Activated CD4-positive, alpha-beta T cell treated with anti-CD3 and anti-CD28 coated beads, Interleukin-2, amount 10 ng/mL, durations not matched to agents 24 days and 14 days (primary cell): ENCODE measurements at regions of chr9 and their contacts with region 1.

Region 1: GRCh38 chr9:127955294-127956035 is 17.8 kb upstream of the DPM2 start:
- DNase-seq: peak; percentile 89
- H3K4me3 Mint-ChIP-seq: peak overlapping the region; percentile 42
- H3K27ac Mint-ChIP-seq: peak overlapping the region; percentile 72
- H3K4me1 Mint-ChIP-seq: peaks cover 71% of the 10 kb centered on the region
- H3K27me3 Mint-ChIP-seq: no peaks in the 10 kb centered on the region

Region 2: DNA sequence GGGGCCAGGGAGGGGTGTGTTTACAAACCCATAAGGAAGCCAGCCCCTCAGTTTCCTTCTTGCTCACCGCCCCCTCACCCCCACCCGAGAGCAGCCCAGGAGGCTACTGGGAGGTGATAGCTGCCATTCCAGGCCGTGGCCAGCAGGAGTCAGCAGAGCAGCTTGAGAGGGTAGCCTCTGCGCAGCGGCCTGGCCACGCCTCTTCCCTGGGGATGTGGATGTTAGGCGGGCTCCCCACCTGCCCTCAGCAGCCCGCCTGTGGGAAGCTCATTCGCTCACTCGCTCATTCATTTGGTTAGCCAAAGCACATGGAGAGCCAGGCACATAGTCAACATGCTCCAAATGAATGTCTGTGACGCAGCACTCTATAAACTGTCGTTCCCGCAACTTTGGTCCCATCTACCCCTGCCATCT is 11.7 kb before region 1 on chr9:
- intact Hi-C with region 1: loop called (anchors 1 kb)
- DNase-seq: peak; percentile 93
- H3K4me3 Mint-ChIP-seq: no peak overlapping the region
- H3K27ac Mint-ChIP-seq: peak overlapping the region; percentile 80
- H3K4me1 Mint-ChIP-seq: peaks cover 17% of the 10 kb centered on the region
- H3K27me3 Mint-ChIP-seq: no peaks in the 10 kb centered on the region

Region 3: DNA sequence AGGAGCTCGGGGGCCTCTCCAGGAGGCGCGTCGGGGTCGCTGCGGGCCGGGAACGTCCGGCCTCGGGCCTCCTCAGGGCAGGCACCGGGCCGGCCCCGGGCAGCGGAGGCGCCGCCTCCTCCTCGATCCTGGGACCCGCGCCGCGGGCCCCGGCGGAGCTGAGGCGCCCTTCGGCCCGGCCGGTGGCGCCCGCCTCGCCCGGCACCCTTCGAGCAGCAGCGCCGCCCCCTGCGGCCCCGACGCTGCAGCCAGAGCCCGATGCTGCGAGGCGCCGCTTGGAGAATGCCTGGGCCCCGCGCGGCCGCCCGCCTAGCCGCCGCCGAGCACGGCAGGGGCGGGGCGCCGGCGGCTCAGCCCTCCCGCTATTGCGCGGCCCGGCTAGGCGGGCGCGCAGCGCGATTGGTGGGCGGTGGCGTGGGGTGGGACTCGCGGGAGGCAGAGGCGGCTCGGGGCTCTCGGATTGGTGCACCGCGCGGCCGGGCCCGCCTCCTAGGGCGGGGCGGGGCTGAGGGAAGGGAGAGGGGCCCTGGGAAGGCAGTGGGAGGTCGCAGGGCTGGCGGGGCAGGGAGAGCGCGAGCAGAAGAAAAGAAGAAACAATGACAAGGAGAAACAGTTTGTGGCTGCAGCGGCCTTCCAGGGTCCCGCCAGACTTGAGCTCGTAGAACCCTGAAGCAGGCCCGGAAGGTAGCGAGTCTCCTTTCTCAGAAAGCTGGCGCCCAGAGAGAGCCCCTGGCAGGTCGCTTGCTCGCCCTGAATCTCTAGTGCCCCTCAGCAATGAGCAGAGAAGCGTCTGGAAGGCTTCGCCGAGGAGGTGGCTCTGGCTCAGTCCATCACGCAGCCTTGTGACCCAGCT is 25.5 kb after region 1 on chr9 and contains the start of gene EEIG1:
- intact Hi-C with region 1: loop called (anchors 1 kb)
- DNase-seq: peak; percentile 100
- H3K4me3 Mint-ChIP-seq: peak within 1 kb of the TSS; percentile 96
- H3K27ac Mint-ChIP-seq: peak within 1 kb of the TSS; percentile 94
- H3K4me1 Mint-ChIP-seq: peaks cover 53% of the 10 kb centered on the region
- H3K27me3 Mint-ChIP-seq: no peaks in the 10 kb centered on the region
- total RNA-seq, gene EEIG1: 56.1 and 64.4 TPM in 2 replicates

Region 4: DNA sequence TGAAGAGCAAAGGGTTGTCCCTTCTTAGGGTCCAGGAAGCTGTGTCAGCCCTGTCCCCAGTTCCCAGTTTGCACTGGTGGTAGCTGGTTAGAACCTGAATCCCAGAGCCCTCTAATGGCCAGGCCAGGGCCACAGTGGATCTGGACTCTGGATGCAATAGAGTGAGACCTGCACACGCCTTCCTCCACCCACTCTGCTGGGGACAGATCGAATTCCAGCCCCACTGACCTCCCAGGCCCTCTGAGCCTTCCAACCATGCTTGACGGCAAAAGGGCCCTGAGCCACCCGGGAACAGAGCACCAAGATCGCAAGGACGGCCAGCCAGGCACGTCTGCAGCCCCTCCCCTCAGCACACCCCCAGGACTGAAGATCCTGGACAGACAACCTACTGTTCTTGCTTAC is 88.0 kb after region 1 on chr9:
- intact Hi-C with region 1: no loop called
- DNase-seq: no peak
- H3K4me3 Mint-ChIP-seq: no peak overlapping the region
- H3K27ac Mint-ChIP-seq: no peak overlapping the region
- H3K4me1 Mint-ChIP-seq: peaks cover 6% of the 10 kb centered on the region
- H3K27me3 Mint-ChIP-seq: peaks cover 3% of the 10 kb centered on the region

Region 5: DNA sequence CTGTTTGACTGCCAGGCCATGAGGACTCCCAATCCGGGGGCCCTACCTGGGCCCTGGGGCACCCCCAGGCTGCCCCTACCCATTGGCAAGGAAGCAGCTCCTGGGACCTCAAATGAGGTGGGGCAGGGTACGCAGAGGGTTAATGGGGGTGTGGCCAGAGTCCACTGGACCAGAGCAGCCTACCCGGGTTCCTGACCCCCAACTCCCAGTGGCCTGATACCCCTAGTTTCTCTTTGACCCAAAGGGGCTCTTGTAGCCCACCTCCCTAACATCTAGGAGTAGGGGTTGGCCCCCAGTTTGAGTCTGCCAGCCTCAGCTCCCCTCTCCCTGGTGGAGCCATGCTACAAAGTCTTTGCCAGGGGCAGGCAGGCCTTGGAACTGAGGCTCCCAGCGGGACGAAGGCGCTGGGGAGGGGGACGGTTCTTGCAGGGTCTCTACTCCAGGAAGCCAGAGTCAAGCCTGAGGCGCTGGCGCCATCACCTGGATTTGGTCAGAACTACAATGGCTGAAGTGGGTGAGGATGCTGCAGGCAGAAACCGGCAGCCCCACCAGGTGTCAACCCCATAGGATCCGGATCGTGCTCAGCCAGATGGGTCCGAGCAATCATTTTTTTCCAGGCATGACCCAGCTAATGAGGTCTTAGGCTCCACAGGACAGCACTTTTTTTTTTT is 456.8 kb after region 1 on chr9:
- intact Hi-C with region 1: no loop called
- DNase-seq: peak; percentile 89
- H3K4me3 Mint-ChIP-seq: no peak overlapping the region
- H3K27ac Mint-ChIP-seq: no peak overlapping the region
- H3K4me1 Mint-ChIP-seq: peaks cover 3% of the 10 kb centered on the region
- H3K27me3 Mint-ChIP-seq: peaks cover 45% of the 10 kb centered on the region